ENCODE measurements at regions of chr16 and their contacts with region 1.

Region 1: GRCh38 chr16:67480833-67481560 is at the start of gene ATP6V0D1:
- DNase-seq: peak; percentile 99
- H3K4me3 Mint-ChIP-seq: peak within 1 kb of the TSS; percentile 98
- H3K27ac Mint-ChIP-seq: peak within 1 kb of the TSS; percentile 96
- H3K4me1 Mint-ChIP-seq: peaks cover 46% of the 10 kb centered on the region
- H3K27me3 Mint-ChIP-seq: no peaks in the 10 kb centered on the region
- total RNA-seq, gene ATP6V0D1: 52.8 to 59.5 TPM

Region 2: DNA sequence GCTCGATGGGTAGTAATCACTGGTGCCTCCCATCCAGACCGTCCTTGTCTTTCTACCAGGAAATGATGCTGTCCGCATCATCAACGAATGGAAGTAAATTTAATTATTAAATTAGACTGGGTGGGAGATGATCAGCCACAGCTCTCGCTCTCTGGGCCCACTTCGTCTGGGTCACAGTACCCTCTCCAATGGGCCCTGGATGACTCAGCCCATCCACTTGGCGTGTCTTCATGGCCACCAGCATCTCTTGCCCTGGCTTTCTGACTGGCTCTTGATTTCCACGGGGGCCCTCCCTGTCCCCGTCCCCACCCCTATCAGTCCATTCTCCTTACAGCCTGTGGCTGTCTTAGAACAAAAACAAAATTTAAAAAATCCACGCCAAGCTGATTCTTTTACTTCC is 58.8 kb before region 1 on chr16:
- CTCF ChIA-PET with region 1: no interaction called
- POLR2A ChIA-PET with region 1: no interaction called
- DNase-seq: no peak
- H3K4me3 Mint-ChIP-seq: no peak overlapping the region
- H3K27ac Mint-ChIP-seq: no peak overlapping the region
- H3K4me1 Mint-ChIP-seq: peaks cover 4% of the 10 kb centered on the region
- H3K27me3 Mint-ChIP-seq: peaks cover 34% of the 10 kb centered on the region

Region 3: GRCh38 chr16:67499106-67499505 is 18.1 kb after region 1 on chr16:
- CTCF ChIA-PET with region 1: interaction called, 25 read pairs
- POLR2A ChIA-PET with region 1: interaction called, 32 read pairs
- DNase-seq: no peak
- H3K4me3 Mint-ChIP-seq: no peak overlapping the region
- H3K27ac Mint-ChIP-seq: peak overlapping the region; percentile 51
- H3K4me1 Mint-ChIP-seq: peaks cover 30% of the 10 kb centered on the region
- H3K27me3 Mint-ChIP-seq: no peaks in the 10 kb centered on the region

Region 4: DNA sequence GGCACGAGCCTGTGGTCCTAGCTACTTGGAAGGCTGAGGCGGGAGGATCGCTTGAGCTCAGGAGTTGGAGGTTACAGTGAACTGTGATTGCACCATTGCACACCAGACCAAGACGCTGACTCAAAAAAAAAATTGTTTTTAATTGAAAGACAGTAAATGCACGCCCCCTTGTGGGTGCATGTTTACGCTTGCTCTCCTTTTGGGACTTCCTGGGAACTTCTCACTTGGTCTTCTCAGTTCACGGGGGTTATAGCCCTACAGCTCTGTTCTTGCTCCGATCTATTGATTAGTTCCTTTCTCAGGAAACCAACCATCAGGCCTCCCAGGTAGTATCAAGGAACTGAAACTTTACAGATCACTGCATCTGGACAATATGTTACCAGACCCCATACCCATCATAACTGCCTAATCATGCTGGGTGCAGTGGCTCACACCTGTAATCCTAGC is 33.4 kb after region 1 on chr16:
- CTCF ChIA-PET with region 1: interaction called, 74 read pairs
- POLR2A ChIA-PET with region 1: interaction called, 8 read pairs
- DNase-seq: peak; percentile 87
- H3K4me3 Mint-ChIP-seq: no peak overlapping the region
- H3K27ac Mint-ChIP-seq: peak overlapping the region; percentile 61
- H3K4me1 Mint-ChIP-seq: peaks cover 23% of the 10 kb centered on the region
- H3K27me3 Mint-ChIP-seq: peaks cover 4% of the 10 kb centered on the region

Region 5: GRCh38 chr16:67555795-67556212 is 74.8 kb after region 1 on chr16:
- CTCF ChIA-PET with region 1: interaction called, 20 read pairs
- POLR2A ChIA-PET with region 1: interaction called, 23 read pairs
- DNase-seq: no peak
- H3K4me3 Mint-ChIP-seq: peak overlapping the region; percentile 19
- H3K27ac Mint-ChIP-seq: peak overlapping the region; percentile 97
- H3K4me1 Mint-ChIP-seq: peaks cover 53% of the 10 kb centered on the region
- H3K27me3 Mint-ChIP-seq: no peaks in the 10 kb centered on the region

Region 6: DNA sequence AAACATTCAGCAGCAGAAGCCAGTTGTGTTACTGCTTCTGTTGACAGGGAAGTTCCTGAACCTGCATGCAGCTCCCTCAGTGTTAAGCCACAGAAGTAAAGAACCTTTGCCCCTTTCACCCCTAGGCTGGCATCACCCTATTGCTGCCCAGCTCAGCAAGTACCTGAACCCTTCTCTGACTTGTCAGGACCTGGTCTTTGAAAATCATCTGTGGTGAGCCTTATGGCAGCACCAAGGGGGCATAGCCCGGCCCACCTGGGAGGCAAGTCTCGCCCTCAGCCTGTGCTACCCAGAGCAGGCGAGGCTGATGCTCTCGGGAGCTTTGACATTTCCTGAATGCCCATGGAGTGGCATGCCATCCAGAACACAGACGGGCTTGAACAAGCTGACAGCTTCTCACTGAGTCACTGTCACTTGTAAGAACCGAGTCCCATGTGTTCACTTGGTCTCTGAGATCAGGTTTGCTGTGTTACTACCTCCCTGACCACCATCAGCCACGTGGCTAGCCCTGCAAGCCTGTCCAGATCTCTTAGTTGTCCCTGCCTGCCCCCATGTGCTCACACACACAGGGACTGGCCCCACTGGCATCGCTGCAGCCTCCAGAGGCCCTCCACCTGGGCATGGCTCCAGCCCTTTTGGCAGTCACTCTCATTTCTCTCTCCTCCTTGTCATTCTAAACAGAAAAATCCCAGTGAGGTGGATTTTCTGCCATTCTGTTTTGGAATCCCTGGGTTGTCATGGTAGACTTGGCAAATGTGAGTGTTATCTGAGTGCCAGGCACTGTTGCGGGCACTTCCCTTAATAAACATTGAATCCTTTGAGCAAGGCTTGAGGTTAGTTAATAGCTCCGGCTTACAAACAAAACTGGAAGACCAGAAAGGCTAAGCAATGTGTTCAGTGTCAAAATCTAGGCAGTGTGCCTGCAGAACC is 161.0 kb after region 1 on chr16:
- CTCF ChIA-PET with region 1: interaction called, 12 read pairs
- POLR2A ChIA-PET with region 1: interaction called, 8 read pairs
- DNase-seq: no peak
- H3K4me3 Mint-ChIP-seq: no peak overlapping the region
- H3K27ac Mint-ChIP-seq: no peak overlapping the region
- H3K4me1 Mint-ChIP-seq: peaks cover 24% of the 10 kb centered on the region
- H3K27me3 Mint-ChIP-seq: no peaks in the 10 kb centered on the region

Region 7: DNA sequence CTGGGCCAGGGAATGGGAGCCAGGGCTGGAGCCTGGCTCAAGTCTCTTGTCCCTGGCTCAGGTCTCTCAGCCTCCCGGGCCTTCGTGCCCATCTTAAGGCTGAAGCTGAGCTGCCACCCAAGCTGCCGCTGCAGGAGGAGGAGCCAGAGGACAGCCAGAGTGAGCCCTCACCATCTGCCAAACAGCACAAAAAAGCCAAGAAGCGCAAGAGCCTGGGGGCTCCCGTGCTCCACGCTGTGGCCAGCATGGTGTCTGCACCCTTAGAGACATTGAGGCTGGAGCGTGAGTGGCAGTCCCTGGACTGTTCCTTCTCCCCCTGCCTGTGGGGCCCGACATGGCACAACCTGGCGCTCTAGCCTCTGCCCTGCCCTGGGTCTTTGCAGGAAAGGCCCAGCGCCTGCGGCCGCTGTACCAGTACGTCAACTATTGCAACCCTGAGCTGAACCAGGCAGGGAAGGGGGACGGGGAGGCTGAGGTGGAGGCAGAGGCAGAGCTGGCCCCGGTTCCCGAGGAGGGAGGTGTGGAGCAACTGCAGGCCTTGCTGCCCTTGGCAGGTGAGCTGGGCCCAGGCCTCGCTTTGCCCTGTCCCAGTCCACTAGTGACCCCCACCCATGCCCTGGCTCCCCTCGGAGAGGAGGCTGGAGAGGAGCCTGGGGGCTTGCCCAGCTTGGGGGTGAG is 187.0 kb after region 1 on chr16:
- CTCF ChIA-PET with region 1: interaction called, 12 read pairs
- POLR2A ChIA-PET with region 1: interaction called, 5 read pairs
- DNase-seq: peak; percentile 88
- H3K4me3 Mint-ChIP-seq: peak overlapping the region; percentile 86
- H3K27ac Mint-ChIP-seq: no peak overlapping the region
- H3K4me1 Mint-ChIP-seq: peaks cover 30% of the 10 kb centered on the region
- H3K27me3 Mint-ChIP-seq: no peaks in the 10 kb centered on the region